ENCODE measurements at regions of chr7 and their contacts with region 1.

Region 1: GRCh38 chr7:5077740-5078139 is 32.1 kb downstream of the RBAK start:
- DNase-seq: no peak
- CTCF ChIP-seq: no peak

Region 2: DNA sequence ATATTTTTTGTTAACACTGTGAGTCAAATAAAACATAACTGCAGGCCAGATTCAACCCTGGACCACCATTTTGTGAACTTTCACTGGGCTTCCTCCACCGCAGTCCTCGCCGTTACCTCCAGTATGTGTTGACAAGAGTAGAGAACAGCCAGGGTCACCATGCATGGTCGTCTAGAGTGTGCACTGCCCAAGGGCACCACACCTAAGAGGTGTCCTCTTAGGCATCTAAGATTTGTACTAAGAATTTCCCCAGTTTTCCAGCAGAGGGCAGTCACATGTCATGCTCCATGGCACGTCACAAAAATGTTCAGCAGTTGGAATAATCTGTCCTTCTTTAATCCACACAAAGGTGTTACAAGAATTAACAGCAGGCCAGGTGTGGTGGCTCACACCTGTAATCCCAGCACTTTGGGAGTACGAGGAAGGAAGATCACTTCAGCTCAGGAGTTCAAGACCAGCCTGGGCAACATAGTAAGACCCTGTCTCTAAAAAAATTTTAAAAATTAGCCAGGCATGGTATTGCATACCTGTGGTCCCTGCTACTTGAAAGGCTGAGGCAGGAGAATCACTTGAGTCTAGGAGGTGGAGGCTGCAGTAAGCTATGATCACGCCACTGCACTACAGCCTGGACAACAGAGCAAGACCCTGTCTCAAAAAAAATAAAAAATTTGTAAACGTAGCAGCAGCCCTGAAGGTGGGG is 466.8 kb before region 1 on chr7:
- in situ Hi-C with region 1: loop called (anchors 25 kb)
- DNase-seq: peak; percentile 76
- CTCF ChIP-seq: peak; percentile 79

Region 3: DNA sequence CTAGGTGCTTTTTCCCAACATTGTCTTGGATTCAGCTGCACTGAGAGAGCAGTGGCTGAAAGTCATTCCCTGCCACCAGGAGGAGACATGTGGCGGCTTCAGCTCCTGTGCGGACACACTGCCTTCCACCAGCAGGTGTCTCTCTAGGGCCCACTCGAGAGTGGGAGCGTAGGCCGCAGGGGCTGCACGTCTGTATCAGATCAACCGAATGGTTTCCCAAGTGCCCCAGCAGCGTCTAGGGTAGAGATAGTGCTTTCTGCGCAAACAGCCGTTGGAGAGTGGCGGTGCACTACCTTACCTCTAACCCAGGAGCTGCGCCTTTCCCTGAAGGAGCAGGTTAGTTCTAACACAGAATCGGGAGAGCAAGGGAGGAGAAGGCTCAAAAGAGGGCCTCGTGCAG is 247.6 kb before region 1 on chr7:
- in situ Hi-C with region 1: loop called (anchors 25 kb)
- DNase-seq: peak; percentile 75
- CTCF ChIP-seq: peak; percentile 89

Measured in GM13977 (cell line).